ENCODE measurements at regions of chr22 and their contacts with region 1.

Region 1: DNA sequence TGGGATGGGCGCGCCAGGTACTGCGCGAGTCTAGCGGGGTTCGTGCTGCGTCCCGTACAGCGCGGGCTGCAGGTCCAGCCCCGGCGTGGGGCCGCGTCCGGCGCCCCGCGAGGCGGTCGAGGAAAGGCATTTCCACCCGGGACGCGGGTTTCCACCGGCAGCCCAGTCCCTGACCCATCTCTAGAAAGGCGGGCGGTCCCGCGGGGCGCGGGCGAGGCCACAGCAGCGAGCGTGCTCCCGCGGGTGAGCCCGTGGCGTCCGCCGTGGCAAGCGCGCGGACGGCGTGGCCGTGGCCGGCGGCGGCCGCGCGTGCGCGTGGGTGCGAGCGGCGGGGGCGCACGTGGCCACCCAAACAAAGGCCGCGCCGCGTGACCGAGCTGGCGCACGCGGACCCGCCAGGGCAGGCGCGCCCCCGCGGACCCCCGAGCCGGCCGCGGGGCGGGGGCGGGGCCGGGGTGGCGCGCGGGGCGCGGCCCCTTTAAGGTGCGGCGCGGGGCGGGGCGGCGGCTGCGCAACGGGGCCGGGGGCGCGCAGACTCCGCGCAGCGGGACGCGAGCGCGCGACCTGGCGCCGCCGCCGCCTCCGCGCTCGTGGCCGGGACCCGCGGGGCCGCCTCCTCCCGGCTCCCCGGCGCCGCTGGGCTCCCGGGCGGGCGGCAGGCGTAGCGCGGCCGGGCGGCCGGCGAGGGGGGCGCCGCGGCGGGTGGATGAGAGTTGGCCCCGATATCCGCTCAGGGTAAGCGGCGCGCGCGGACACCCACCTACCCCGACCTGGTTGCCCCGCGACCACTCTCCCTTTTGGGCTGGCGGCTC is 39.3 kb upstream of the CELSR1 start:
- DNase-seq: peak; percentile 35 to 85 (median 56)
- ATAC-seq: peak in 3 of 4 donors; percentile 6 to 47 (median 17)
- H3K4me3 ChIP-seq: peak overlapping the region in 3 of 4 donors; percentile 60 to 79 (median 75)
- H3K27ac ChIP-seq: peak overlapping the region; percentile 78 to 97 (median 88)
- H3K4me1 ChIP-seq: peaks cover 51 to 68% (median 52%) of the 10 kb centered on the region in 3 donors
- H3K27me3 ChIP-seq: no peaks in the 10 kb centered on the region
- CTCF ChIP-seq: no peak

Region 2: DNA sequence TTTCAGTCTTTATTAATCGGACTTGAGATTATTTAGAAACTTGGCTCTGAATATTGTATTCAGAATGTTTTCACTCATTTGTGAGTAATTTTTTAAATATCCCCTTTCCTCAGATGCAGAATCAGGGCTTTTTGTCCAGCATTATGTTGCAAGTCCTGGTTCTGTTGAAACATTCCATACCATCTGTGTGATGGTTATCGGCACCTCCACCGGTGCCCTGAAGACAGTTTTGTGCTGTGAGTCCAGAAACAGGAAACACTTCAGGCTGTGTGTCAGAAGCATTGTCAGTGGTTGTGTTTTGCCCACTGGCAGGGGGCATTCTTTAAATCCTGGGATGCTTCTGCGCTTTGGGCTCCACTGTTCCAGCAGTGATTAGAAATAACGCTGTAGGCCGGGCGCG is 347.1 kb before region 1 on chr22:
- intact Hi-C with region 1: no loop called
- DNase-seq: no peak
- ATAC-seq: no peak
- H3K4me3 ChIP-seq: no peak overlapping the region
- H3K27ac ChIP-seq: no peak overlapping the region
- H3K4me1 ChIP-seq: no peaks in the 10 kb centered on the region
- H3K27me3 ChIP-seq: no peaks in the 10 kb centered on the region
- CTCF ChIP-seq: no peak

Region 3: DNA sequence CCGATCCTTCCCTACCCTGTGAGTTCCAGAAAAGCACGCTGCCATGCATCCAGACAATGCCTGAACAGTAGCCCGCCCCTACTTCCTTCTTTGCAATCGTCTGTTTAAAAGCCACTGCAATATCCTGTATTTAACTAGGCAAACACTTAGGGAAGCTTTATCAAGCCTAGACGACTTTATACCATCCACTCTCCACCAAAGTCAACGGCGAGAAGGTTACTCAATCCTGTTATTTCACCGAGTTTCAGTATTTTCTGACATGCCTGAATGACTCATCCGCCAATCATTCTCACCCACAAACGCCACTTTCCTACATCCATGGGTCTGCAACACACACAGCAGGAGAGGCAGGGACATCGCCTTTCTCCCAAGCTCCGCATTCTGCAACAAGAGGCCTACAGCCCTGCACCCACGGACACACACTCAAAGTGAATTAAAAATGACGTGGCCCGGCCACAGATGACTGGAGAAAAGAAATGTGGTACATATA is 48.6 kb before region 1 on chr22:
- intact Hi-C with region 1: no loop called
- DNase-seq: no peak
- ATAC-seq: peak in 3 of 4 donors; percentile 24 to 62 (median 56)
- H3K4me3 ChIP-seq: no peak overlapping the region
- H3K27ac ChIP-seq: no peak overlapping the region
- H3K4me1 ChIP-seq: no peaks in the 10 kb centered on the region
- H3K27me3 ChIP-seq: no peaks in the 10 kb centered on the region
- CTCF ChIP-seq: no peak

Region 4: DNA sequence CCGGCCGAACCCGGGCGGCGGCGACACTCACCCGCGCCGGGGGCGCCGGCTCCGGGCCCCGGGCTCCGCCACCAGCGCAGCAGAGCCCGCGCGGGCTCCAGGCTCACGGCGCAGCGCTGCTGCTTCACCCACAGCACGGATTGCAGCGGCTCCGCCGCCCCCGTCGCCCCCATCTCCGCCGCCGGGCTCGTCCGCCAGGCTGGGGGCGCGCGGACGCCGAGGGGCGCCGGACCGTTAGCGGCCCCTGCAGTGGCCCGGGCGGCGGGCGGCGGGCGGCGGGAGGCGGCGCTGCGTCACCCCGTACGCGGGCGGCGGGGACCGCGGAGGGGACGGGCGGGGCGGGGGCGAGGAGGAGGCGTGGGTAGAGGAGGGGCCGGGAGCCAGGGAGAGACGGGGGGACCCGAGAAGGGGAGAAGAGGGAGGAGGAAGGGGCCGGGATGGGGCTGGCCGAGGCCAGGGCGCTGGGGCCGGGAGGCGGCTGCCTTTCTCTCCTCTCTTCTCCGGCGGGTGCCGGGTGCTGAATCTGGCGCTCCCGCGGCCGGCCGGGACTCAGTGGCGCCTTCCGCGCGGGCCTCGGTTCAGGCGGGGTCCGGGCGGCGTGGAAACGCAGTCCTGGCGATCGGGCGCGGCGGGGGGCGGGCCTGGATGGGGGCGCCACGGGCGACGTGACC is 161.3 kb after region 1 on chr22 and contains the start of gene CERK:
- intact Hi-C with region 1: loop called in 1 of 3 experiments (anchors 10 kb)
- DNase-seq: peak; percentile 78 to 89 (median 86)
- ATAC-seq: peak; percentile 75 to 77 (median 76)
- H3K4me3 ChIP-seq: peak within 1 kb of the TSS; percentile 57 to 82 (median 65)
- H3K27ac ChIP-seq: peak within 1 kb of the TSS; percentile 79 to 90 (median 83)
- H3K4me1 ChIP-seq: peaks cover 42 to 51% (median 46%) of the 10 kb centered on the region in 3 donors
- H3K27me3 ChIP-seq: no peaks in the 10 kb centered on the region
- CTCF ChIP-seq: no peak
- total RNA-seq, gene CERK: 24.7 to 32.7 (median 29.7) TPM

Region 5: GRCh38 chr22:46758867-46759290 is 182.1 kb after region 1 on chr22:
- intact Hi-C with region 1: loop called in 1 of 3 experiments (anchors 10 kb)
- DNase-seq: peak in 4 of 6 donors; percentile 61 to 74 (median 66)
- ATAC-seq: peak in 3 of 4 donors; percentile 44 to 57 (median 48)
- H3K4me3 ChIP-seq: no peak overlapping the region
- H3K27ac ChIP-seq: peak overlapping the region in 2 of 4 donors; percentile 33 to 50
- H3K4me1 ChIP-seq: peaks cover 5 to 24% (median 16%) of the 10 kb centered on the region in 3 donors
- H3K27me3 ChIP-seq: no peaks in the 10 kb centered on the region
- CTCF ChIP-seq: peak; percentile 64 to 69 (median 68)

Measured in pancreas (tissue), 10 donors.